Activated naive CD4-positive, alpha-beta T cell treated with anti-CD3 and anti-CD28 coated beads for 36 hours (primary cell): ENCODE measurements at regions of chr10 and their contacts with region 1.

Region 1: GRCh38 chr10:130179640-130180039 is 43.4 kb downstream of the GLRX3 start:
- DNase-seq: peak; percentile 70
- H3K4me3 Mint-ChIP-seq: no peak overlapping the region
- H3K27ac Mint-ChIP-seq: no peak overlapping the region
- H3K4me1 Mint-ChIP-seq: peaks cover 5% of the 10 kb centered on the region
- H3K27me3 Mint-ChIP-seq: no peaks in the 10 kb centered on the region

Region 2: GRCh38 chr10:129466703-129467358 is 712.8 kb before region 1 on chr10 and contains the start of gene MGMT:
- CTCF ChIA-PET with region 1: no interaction called
- intact Hi-C with region 1: loop called (anchors 5 kb)
- DNase-seq: peak; percentile 98
- H3K4me3 Mint-ChIP-seq: peak within 1 kb of the TSS; percentile 78
- H3K27ac Mint-ChIP-seq: peak within 1 kb of the TSS; percentile 70
- H3K4me1 Mint-ChIP-seq: peaks cover 14% of the 10 kb centered on the region
- H3K27me3 Mint-ChIP-seq: no peaks in the 10 kb centered on the region
- total RNA-seq, gene MGMT: 24.6 to 26.0 TPM

Region 3: GRCh38 chr10:129888784-129889616 is 290.6 kb before region 1 on chr10:
- CTCF ChIA-PET with region 1: interaction called, 3 read pairs
- intact Hi-C with region 1: loop called (anchors 5 kb)
- DNase-seq: peak; percentile 49
- H3K4me3 Mint-ChIP-seq: no peak overlapping the region
- H3K27ac Mint-ChIP-seq: no peak overlapping the region
- H3K4me1 Mint-ChIP-seq: no peaks in the 10 kb centered on the region
- H3K27me3 Mint-ChIP-seq: no peaks in the 10 kb centered on the region

Region 4: GRCh38 chr10:130136226-130137089 is 43.2 kb before region 1 on chr10 and contains the start of gene GLRX3:
- CTCF ChIA-PET with region 1: no interaction called
- intact Hi-C with region 1: loop called (anchors 2 kb)
- DNase-seq: peak; percentile 86
- H3K4me3 Mint-ChIP-seq: peak within 1 kb of the TSS; percentile 91
- H3K27ac Mint-ChIP-seq: peak within 1 kb of the TSS; percentile 75
- H3K4me1 Mint-ChIP-seq: peaks cover 48% of the 10 kb centered on the region
- H3K27me3 Mint-ChIP-seq: peaks cover 6% of the 10 kb centered on the region
- total RNA-seq, gene GLRX3: 86.2 to 86.5 TPM